ENCODE measurements at regions of chr17 and their contacts with region 1.

Region 1: DNA sequence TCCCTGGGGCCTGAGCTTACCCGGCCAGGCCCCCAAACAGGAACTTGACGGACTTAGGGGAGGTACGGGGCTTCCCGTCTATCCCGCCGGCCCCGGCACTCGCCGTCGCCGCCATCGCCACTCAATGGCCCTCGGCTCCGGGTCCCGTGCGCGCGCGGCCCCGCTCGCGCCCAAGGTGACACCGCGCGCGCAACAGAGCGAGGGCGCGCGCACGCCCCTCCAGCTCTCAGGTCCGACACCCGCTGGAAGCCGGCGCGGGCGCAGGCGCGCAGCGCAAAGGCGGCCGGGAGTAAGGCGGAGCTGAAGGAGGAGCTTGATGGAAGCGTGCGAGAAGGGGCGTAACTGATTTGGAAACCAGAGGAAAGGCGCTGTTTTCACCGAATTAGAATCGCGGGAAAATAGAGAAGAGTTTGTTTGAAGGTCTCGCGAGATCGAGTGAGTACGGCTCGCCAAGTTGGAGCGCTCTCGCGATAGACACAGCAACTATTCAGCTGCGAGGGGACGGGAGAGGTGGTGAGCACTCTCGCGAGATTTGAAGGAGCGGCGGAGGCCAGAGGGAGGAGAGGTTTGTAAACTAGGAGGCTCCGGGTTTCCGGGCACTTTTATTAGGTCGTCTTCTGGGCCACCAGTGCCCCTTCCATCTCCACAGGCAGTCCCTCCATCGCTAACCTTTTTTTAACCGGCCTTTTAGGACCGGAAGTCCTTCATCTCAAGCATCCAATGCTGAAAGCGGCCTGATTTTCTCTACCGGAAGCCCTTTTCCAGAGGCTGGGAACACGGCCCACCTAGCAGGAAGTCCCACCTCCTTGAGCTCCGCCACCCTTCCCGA is at the starts of genes RNF167 and SLC25A11:
- DNase-seq: peak; percentile 99
- ATAC-seq: peak; percentile 84
- H3K4me3 ChIP-seq: peak within 1 kb of the TSS; percentile 83 to 100 (median 86)
- H3K4me3 Mint-ChIP-seq: peak within 1 kb of the TSS; percentile 89
- H3K27ac ChIP-seq: peak within 1 kb of the TSS; percentile 84 to 87
- H3K27ac Mint-ChIP-seq: peak within 1 kb of the TSS; percentile 95
- H3K4me1 ChIP-seq: peaks cover 50 to 59% of the 10 kb centered on the region in 2 donors
- H3K4me1 Mint-ChIP-seq: peaks cover 58% of the 10 kb centered on the region
- H3K27me3 ChIP-seq: no peaks in the 10 kb centered on the region
- H3K27me3 Mint-ChIP-seq: no peaks in the 10 kb centered on the region
- CTCF ChIP-seq: no peak
- total RNA-seq, gene RNF167: 131 and 143 TPM in 2 replicates
- total RNA-seq, gene SLC25A11: 32.3 and 42.7 TPM in 2 replicates

Region 2: DNA sequence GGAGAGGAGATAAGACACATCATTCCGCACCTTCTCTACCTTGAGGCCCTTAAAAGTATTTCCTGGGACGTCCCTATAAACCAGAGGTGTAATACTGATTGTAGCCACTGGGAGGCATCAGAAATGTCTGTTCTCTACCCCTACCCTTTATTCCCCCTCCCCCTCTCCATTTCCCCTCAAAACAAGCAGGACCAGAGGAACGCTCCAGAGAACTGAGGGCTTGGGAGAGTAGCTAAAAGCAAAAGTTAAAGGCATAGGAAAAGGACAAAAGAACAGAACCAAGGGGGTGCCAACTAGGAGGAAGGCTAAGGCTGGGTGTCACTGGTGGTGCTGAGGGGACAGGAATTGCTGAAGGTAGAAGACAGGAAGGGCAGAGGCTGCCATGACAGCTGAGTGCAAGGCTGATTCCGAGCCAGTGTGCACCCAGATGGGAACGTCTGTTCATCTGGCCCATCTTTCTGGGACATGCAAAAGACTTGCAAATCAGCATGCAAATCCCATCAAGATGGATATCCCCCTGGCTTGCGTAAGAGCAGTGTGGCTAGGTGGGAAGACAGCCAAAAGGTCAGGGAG is 40.7 kb after region 1 on chr17:
- CTCF ChIA-PET with region 1: interaction called, 12 read pairs
- POLR2A ChIA-PET with region 1: interaction called, 3 read pairs
- intact Hi-C with region 1: no loop called
- DNase-seq: peak; percentile 66
- ATAC-seq: peak; percentile 75
- H3K4me3 ChIP-seq: no peak overlapping the region
- H3K4me3 Mint-ChIP-seq: peak overlapping the region; percentile 29
- H3K27ac ChIP-seq: no peak overlapping the region
- H3K27ac Mint-ChIP-seq: peak overlapping the region; percentile 87
- H3K4me1 ChIP-seq: peaks cover 18 to 35% of the 10 kb centered on the region in 2 donors
- H3K4me1 Mint-ChIP-seq: peaks cover 41% of the 10 kb centered on the region
- H3K27me3 ChIP-seq: no peaks in the 10 kb centered on the region
- H3K27me3 Mint-ChIP-seq: no peaks in the 10 kb centered on the region
- CTCF ChIP-seq: peak; percentile 77

Region 3: GRCh38 chr17:4986951-4987766 is 47.1 kb after region 1 on chr17 and contains the start of gene CAMTA2:
- CTCF ChIA-PET with region 1: interaction called, 7 read pairs
- POLR2A ChIA-PET with region 1: interaction called, 11 read pairs
- intact Hi-C with region 1: no loop called
- DNase-seq: peak; percentile 91
- ATAC-seq: peak; percentile 89
- H3K4me3 ChIP-seq: peak within 1 kb of the TSS; percentile 67 to 96 (median 81)
- H3K4me3 Mint-ChIP-seq: peak within 1 kb of the TSS; percentile 91
- H3K27ac ChIP-seq: peak within 1 kb of the TSS; percentile 84 to 90
- H3K27ac Mint-ChIP-seq: peak within 1 kb of the TSS; percentile 90
- H3K4me1 ChIP-seq: peaks cover 21 to 28% of the 10 kb centered on the region in 2 donors
- H3K4me1 Mint-ChIP-seq: peaks cover 35% of the 10 kb centered on the region
- H3K27me3 ChIP-seq: no peaks in the 10 kb centered on the region
- H3K27me3 Mint-ChIP-seq: no peaks in the 10 kb centered on the region
- CTCF ChIP-seq: peak; percentile 88
- total RNA-seq, gene CAMTA2: 57.6 and 57.9 TPM in 2 replicates

Region 4: GRCh38 chr17:5249615-5250014 is 309.6 kb after region 1 on chr17:
- CTCF ChIA-PET with region 1: no interaction called
- POLR2A ChIA-PET with region 1: no interaction called
- intact Hi-C with region 1: loop called (anchors 10 kb)
- DNase-seq: peak; percentile 84
- ATAC-seq: peak; percentile 86
- H3K4me3 ChIP-seq: no peak overlapping the region
- H3K4me3 Mint-ChIP-seq: no peak overlapping the region
- H3K27ac ChIP-seq: no peak overlapping the region
- H3K27ac Mint-ChIP-seq: peak overlapping the region; percentile 22
- H3K4me1 ChIP-seq: peaks cover 21 to 24% of the 10 kb centered on the region in 2 donors
- H3K4me1 Mint-ChIP-seq: peaks cover 40% of the 10 kb centered on the region
- H3K27me3 ChIP-seq: no peaks in the 10 kb centered on the region
- H3K27me3 Mint-ChIP-seq: no peaks in the 10 kb centered on the region
- CTCF ChIP-seq: peak; percentile 74